Activated CD8-positive, alpha-beta T cell treated with anti-CD3 and anti-CD28 coated beads, Interleukin-2, amount 10 ng/mL, durations not matched to agents 7 days and 5 days (primary cell): ENCODE measurements at regions of chr16 and their contacts with region 1.

Region 1: GRCh38 chr16:11639925-11640899 is 28.0 kb upstream of the SNN start:
- DNase-seq: no peak
- ATAC-seq: no peak
- H3K4me3 Mint-ChIP-seq: no peak overlapping the region
- H3K27ac Mint-ChIP-seq: no peak overlapping the region
- H3K4me1 Mint-ChIP-seq: peaks cover 8% of the 10 kb centered on the region
- H3K27me3 Mint-ChIP-seq: peaks cover 13% of the 10 kb centered on the region

Region 2: GRCh38 chr16:11530171-11530940 is 109.9 kb before region 1 on chr16:
- CTCF ChIA-PET with region 1: interaction called, 70 read pairs
- POLR2A ChIA-PET with region 1: no interaction called
- DNase-seq: no peak
- ATAC-seq: no peak
- H3K4me3 Mint-ChIP-seq: no peak overlapping the region
- H3K27ac Mint-ChIP-seq: no peak overlapping the region
- H3K4me1 Mint-ChIP-seq: peaks cover 1% of the 10 kb centered on the region
- H3K27me3 Mint-ChIP-seq: peaks cover 2% of the 10 kb centered on the region

Region 3: GRCh38 chr16:11621920-11622651 is 18.1 kb before region 1 on chr16:
- CTCF ChIA-PET with region 1: interaction called, 10 read pairs
- POLR2A ChIA-PET with region 1: interaction called, 5 read pairs
- DNase-seq: peak; percentile 81
- ATAC-seq: peak; percentile 82
- H3K4me3 Mint-ChIP-seq: peak overlapping the region; percentile 66
- H3K27ac Mint-ChIP-seq: peak overlapping the region; percentile 85
- H3K4me1 Mint-ChIP-seq: peaks cover 70% of the 10 kb centered on the region
- H3K27me3 Mint-ChIP-seq: no peaks in the 10 kb centered on the region